H1 (cell line): ENCODE measurements at regions of chr4 and their contacts with region 1.

Region 1: DNA sequence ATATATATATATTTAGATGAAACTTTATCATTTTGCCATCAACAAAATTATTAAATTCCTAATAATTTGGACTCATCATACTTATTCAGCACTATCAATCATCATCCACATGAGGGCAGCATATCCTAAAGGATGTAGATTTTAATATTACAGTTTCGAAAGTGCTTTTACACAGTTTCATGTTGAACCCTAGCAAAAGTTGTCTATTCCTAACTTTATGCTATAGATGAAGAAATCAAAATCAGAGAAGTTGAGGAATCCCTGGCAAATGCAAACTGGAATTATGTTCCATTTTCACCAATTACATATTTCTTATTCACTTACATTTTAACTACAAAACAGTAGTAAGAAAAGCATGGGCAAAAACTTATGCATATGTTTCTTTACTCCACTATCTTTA is 36.6 kb upstream of the UGT2A1 start:
- DNase-seq: no peak
- H3K4me3 ChIP-seq: no peak overlapping the region
- H3K27ac ChIP-seq: no peak overlapping the region
- H3K4me1 ChIP-seq: no peaks in the 10 kb centered on the region
- H3K27me3 ChIP-seq: no peaks in the 10 kb centered on the region
- CTCF ChIP-seq: peak in 2 of 3 experiments; percentile 37 to 41; a peak in 2 of 4 replicates
- EP300 ChIP-seq: no peak
- POLR2A ChIP-seq: no peak
- RAD21 ChIP-seq: peak; percentile 72 to 81

Region 2: DNA sequence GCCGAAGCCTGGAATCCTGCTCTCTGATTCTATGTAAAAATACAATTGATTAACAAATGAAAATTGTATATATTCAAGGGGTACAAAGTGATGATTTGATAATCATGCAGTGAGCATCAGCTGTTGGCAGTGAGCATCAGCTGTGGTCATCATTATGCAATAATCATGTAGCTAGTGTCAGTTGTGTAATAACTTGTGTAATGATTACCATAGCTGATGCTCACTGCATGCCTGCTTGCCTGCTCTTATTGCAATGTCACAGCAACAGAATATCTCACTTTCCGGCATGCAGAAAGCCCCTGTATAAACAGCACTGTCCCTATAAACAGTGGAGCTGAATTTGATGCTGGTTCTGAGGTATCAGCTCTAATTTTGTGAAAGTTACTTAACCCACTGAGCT is 24.0 kb after region 1 on chr4:
- CTCF ChIA-PET with region 1: no interaction called
- POLR2A ChIA-PET with region 1: no interaction called
- DNase-seq: no peak
- H3K4me3 ChIP-seq: no peak overlapping the region
- H3K27ac ChIP-seq: no peak overlapping the region
- H3K4me1 ChIP-seq: peaks cover 0 to 4% (median 0%) of the 10 kb centered on the region in 4 experiments; a peak in 1 of 7 replicates
- H3K27me3 ChIP-seq: no peaks in the 10 kb centered on the region
- CTCF ChIP-seq: no peak
- EP300 ChIP-seq: no peak
- POLR2A ChIP-seq: no peak
- RAD21 ChIP-seq: no peak

Region 3: DNA sequence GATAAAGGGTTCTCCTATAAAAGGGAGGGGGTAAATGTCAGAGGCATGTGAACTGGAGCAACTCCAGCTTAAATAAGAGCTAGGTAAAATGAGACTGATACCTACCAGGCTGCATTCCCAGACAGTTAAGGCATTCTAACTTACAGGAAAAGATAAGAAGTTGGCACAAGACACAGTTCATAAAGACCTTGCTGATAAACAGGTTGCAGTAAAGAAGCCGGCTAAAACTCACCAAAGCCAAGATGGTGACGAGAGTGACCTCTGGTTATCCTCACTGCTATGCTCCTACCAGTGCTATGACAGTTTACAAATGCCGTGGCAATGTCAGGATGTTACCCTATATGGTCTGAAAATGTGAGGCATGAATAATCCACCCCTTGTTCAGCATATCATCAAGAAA is 83.9 kb after region 1 on chr4:
- CTCF ChIA-PET with region 1: no interaction called
- POLR2A ChIA-PET with region 1: no interaction called
- DNase-seq: no peak
- H3K4me3 ChIP-seq: no peak overlapping the region
- H3K27ac ChIP-seq: no peak overlapping the region
- H3K4me1 ChIP-seq: no peaks in the 10 kb centered on the region; a peak in 1 of 7 replicates
- H3K27me3 ChIP-seq: no peaks in the 10 kb centered on the region
- CTCF ChIP-seq: no peak
- EP300 ChIP-seq: no peak
- POLR2A ChIP-seq: no peak
- RAD21 ChIP-seq: no peak

Region 4: DNA sequence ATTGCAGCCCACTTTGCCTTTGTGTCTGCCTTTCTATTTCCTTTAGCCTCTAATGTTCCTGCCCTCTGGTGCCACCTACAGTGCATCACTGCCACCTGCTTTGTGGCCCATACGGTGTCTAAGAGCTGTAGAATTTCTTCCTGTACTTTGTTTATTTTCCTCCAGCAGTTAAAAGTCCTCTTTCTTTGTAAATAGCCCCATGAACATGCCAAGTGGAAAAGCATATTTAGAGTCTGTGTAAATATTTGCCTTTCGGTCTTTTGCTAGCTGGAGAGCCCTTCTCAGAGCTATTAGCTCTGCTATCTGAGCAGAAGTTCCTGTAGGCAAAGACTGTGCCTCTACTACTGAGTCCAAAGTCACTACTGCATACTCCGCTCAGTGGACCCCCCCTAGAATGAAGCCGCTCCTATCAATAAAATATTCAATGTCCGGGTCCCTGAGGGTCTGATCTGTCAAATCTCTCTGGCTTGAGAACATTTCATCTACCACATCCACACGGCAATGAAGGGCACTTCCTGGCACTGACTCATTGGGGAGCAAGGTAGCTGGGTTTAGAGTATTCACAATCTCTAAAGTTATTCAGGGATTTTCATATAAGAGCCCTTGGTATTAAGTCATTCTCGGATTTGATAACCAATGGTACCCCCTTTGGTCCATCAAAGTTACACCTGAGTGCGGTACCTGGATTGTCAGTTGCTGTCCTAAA is 134.0 kb after region 1 on chr4:
- CTCF ChIA-PET with region 1: interaction called, 10 read pairs
- POLR2A ChIA-PET with region 1: no interaction called
- DNase-seq: no peak
- H3K4me3 ChIP-seq: no peak overlapping the region
- H3K27ac ChIP-seq: no peak overlapping the region
- H3K4me1 ChIP-seq: no peaks in the 10 kb centered on the region
- H3K27me3 ChIP-seq: no peaks in the 10 kb centered on the region
- CTCF ChIP-seq: peak; percentile 38 to 63 (median 46)
- EP300 ChIP-seq: no peak
- POLR2A ChIP-seq: no peak
- RAD21 ChIP-seq: peak; percentile 60 to 67

Region 5: DNA sequence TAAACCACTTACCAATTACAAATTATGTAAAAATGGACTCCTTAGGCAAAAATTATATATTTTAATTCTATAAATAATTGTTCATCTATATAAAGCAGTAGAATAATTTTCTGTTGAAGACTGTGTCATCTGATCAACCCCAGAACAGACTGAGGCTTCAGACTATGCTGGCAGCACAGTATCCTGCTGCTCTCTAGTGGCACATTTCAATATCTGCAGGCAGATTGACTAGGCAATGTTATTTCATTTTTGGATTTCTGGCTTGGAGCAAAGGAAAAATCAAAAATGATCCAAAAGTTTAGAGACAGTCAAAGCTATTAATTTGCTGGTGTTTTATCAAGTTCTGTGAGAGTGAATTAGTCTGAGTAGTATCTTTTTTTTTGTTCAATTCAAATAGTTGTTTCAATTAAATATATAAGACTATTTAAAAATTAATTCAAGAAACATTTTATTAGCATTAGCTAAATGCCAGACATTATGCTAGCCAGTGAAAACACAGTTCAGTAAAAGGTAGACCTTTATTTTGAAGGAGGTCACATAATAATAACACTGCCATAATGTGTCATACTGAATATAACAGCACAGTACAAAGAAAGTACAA is 191.7 kb after region 1 on chr4:
- CTCF ChIA-PET with region 1: interaction called, 25 read pairs
- POLR2A ChIA-PET with region 1: no interaction called
- DNase-seq: no peak
- H3K4me3 ChIP-seq: no peak overlapping the region
- H3K27ac ChIP-seq: no peak overlapping the region
- H3K4me1 ChIP-seq: no peaks in the 10 kb centered on the region
- H3K27me3 ChIP-seq: no peaks in the 10 kb centered on the region
- CTCF ChIP-seq: peak in 2 of 3 experiments; percentile 74 to 85; a peak in 3 of 4 replicates
- EP300 ChIP-seq: no peak
- POLR2A ChIP-seq: no peak
- RAD21 ChIP-seq: peak; percentile 97